Calu3 (cell line): ENCODE measurements at regions of chr11 and their contacts with region 1.

Region 1: GRCh38 chr11:66677599-66678375 is at the start of gene RBM4B:
- DNase-seq: peak; percentile 97
- H3K4me3 Mint-ChIP-seq: peak within 1 kb of the TSS; percentile 99
- H3K27ac Mint-ChIP-seq: peak within 1 kb of the TSS; percentile 93
- H3K4me1 Mint-ChIP-seq: peaks cover 25% of the 10 kb centered on the region
- H3K27me3 Mint-ChIP-seq: no peaks in the 10 kb centered on the region
- CTCF ChIP-seq: no peak
- total RNA-seq, gene RBM4B: 20.3 and 23.0 TPM in 2 replicates

Region 2: GRCh38 chr11:66418168-66418985 is 259.4 kb before region 1 on chr11:
- CTCF ChIA-PET with region 1: interaction called, 12 read pairs
- intact Hi-C with region 1: no loop called
- DNase-seq: peak; percentile 77
- H3K4me3 Mint-ChIP-seq: no peak overlapping the region
- H3K27ac Mint-ChIP-seq: no peak overlapping the region
- H3K4me1 Mint-ChIP-seq: peaks cover 21% of the 10 kb centered on the region
- H3K27me3 Mint-ChIP-seq: peaks cover 77% of the 10 kb centered on the region
- CTCF ChIP-seq: peak; percentile 66

Region 3: DNA sequence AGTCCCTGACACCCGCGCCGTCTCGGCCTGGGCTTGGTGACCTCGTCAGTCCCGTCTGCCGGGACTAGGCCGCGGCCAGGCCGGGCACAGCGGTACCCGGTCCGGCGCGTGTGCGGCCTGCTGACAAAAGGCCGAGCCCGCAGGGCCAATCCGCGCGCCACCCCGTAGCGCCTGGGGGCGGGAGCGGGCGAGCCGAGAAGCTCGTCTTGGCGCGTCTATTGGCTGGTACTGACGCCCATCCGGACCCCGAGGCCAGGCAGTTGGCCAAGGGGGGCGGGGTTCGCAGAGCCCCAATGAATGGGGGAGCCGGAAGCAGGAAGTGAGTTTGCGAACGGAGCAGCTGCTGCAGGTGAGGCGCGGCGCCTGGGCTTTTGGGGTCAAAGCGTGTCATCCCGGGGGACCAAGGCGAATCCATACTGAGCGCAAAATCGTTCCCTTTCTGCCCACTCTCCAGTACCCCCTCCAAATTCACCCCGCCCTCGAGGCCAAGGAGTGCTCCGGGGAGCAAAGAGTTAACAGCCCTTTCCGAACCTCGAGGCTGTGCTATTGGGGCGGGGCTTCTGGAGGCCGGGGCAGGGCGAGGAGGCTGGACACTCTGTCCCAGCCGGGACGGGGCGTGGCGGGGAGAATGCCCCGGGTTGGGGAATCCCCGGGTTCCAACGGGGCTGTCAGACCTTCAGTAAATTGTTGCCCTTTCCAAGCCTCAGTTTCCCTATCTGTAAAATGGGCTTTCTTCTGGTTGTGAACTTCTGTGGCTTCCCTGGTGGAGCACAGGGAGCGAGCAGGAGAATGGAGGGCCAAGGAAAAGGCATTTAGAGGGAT is 197.5 kb before region 1 on chr11 and contains the start of gene DPP3:
- CTCF ChIA-PET with region 1: interaction called, 10 read pairs
- intact Hi-C with region 1: no loop called
- DNase-seq: peak; percentile 99
- H3K4me3 Mint-ChIP-seq: peak within 1 kb of the TSS; percentile 93
- H3K27ac Mint-ChIP-seq: peak within 1 kb of the TSS; percentile 92
- H3K4me1 Mint-ChIP-seq: no peaks in the 10 kb centered on the region
- H3K27me3 Mint-ChIP-seq: no peaks in the 10 kb centered on the region
- CTCF ChIP-seq: no peak
- total RNA-seq, gene DPP3: 57.4 and 58.0 TPM in 2 replicates

Region 4: GRCh38 chr11:66579017-66579606 is 98.7 kb before region 1 on chr11:
- CTCF ChIA-PET with region 1: interaction called, 9 read pairs
- intact Hi-C with region 1: loop called (anchors 5 kb)
- DNase-seq: peak; percentile 75
- H3K4me3 Mint-ChIP-seq: no peak overlapping the region
- H3K27ac Mint-ChIP-seq: no peak overlapping the region
- H3K4me1 Mint-ChIP-seq: no peaks in the 10 kb centered on the region
- H3K27me3 Mint-ChIP-seq: peaks cover 54% of the 10 kb centered on the region
- CTCF ChIP-seq: peak; percentile 81

Region 5: GRCh38 chr11:66906061-66906735 is 228.4 kb after region 1 on chr11:
- CTCF ChIA-PET with region 1: no interaction called
- intact Hi-C with region 1: no loop called
- DNase-seq: no peak
- H3K4me3 Mint-ChIP-seq: no peak overlapping the region
- H3K27ac Mint-ChIP-seq: no peak overlapping the region
- H3K4me1 Mint-ChIP-seq: peaks cover 30% of the 10 kb centered on the region
- H3K27me3 Mint-ChIP-seq: no peaks in the 10 kb centered on the region
- CTCF ChIP-seq: no peak